ENCODE measurements at regions of chr3 and their contacts with region 1.

Region 1: DNA sequence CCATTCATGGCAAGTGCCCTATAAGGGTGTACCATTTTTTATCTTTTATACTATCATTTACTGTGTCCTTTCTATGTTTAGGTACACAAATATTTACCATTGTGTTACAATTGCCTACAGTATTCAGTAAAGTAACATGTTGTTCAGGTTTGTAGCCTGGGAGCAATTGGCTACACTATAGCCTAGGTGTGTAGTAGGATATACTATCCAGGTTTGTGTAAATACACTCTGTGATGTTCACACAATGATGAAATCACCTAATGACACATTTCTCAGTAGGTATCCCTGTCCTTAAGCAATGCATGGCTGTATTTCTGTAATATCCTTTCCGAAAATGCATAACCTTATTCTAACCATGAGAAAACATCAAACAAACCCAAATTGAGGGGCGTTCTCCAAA is 17.9 kb upstream of the CNOT10 start:
- DNase-seq: no peak
- H3K4me3 ChIP-seq: no peak overlapping the region
- H3K27ac ChIP-seq: no peak overlapping the region
- H3K4me1 ChIP-seq: no peaks in the 10 kb centered on the region
- CTCF ChIP-seq: no peak

Region 2: DNA sequence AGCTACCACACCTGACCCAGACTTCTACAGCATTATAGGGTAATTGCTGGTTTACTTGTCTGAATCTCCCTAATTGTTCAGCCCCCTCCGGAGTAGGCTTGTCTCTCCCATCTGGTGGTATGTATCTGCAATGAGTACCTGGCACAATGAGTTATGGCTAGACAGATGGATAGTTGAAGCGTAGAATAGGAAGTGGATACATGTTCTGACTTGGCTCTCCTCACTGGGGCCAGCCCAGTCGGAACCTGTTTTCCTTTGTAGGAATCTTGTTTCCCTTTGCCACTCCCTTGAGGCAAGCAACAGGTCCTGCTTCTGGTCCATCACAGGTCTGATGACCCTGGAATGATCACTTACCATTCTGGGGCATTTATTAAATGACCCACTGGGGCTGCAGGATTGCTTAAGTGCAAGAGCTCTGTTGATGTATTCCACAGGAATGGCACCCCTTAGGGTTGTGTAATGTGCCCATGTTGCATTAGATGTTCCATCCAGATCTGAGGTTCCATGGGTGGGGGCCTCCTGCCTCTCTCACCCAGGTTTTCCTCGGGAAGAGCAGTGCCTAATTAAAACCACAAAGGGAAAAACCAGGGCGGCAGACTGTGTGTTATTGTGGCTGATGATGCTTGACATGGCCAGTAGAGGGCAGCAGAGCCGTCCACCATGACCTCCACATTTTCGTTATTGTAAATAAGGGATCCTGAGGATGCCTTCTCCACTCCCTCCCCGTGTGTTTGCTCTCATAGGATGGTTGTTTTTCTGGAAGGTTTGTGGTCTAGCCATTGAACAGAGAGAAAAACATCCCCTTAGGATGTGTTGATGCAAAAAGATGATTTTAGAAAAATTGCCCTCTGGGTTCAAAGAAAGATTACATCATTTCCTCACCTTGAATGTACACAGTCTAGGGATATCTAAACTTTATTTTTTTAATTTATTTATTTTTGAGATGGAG is 370.6 kb before region 1 on chr3:
- CTCF ChIA-PET with region 1: no interaction called
- POLR2A ChIA-PET with region 1: no interaction called
- intact Hi-C with region 1: loop called (anchors 2 kb)
- DNase-seq: peak; percentile 68
- H3K4me3 ChIP-seq: no peak overlapping the region
- H3K27ac ChIP-seq: no peak overlapping the region
- H3K4me1 ChIP-seq: peaks cover 6% of the 10 kb centered on the region
- CTCF ChIP-seq: peak; percentile 95

Measured in OCI-LY7 (cell line).